Tibial artery (tissue), 4 donors: ENCODE measurements at regions of chr4 and their contacts with region 1.

Region 1: DNA sequence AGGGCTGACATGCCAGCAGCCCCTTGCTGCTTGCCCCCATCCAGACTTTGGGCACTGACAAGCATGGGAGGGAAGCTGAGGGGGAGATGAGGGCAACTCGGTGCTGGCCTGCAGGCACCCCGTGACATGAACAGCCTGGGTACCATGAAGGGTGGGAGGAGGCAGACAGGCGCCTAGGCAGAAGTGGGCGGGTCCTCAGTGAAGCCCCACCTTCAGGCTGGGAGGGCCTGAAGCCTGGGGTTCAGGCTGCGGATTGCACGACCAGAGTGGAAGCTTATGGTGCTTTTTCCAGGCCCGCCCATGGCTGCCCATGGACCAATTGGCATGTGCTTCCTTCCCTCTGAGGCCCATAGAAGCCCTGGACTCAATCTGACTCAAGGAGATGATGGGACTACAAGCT is 354.1 kb downstream of the GRIA2 start:
- DNase-seq: no peak
- H3K4me3 ChIP-seq: no peak overlapping the region
- H3K27ac ChIP-seq: no peak overlapping the region
- H3K4me1 ChIP-seq: peaks cover 0 to 6% (median 0%) of the 10 kb centered on the region in 4 donors
- H3K27me3 ChIP-seq: no peaks in the 10 kb centered on the region
- CTCF ChIP-seq: no peak

Region 2: GRCh38 chr4:157634057-157634456 is 59.5 kb after region 1 on chr4:
- intact Hi-C with region 1: no loop called
- DNase-seq: no peak
- H3K4me3 ChIP-seq: no peak overlapping the region
- H3K27ac ChIP-seq: no peak overlapping the region
- H3K4me1 ChIP-seq: no peaks in the 10 kb centered on the region
- H3K27me3 ChIP-seq: no peaks in the 10 kb centered on the region
- CTCF ChIP-seq: no peak

Region 3: DNA sequence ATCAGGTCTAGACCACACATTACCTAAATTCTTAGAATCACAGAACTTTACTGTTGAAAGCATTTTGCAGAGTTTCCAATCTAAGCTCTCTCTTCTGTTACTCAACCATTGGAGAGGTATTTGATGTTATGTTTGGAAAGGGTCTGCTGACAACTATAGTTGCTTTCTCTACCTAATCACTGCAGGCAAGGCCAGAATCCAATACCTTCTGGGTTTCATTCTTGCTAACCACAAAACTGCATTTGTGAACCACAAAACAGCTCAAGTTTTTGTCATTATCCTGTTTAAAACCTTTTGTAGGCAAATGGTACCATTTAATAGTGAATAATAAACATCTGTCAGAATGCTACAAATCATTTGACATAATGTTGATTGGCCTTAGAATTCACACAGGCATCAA is 218.1 kb after region 1 on chr4:
- intact Hi-C with region 1: no loop called
- DNase-seq: no peak
- H3K4me3 ChIP-seq: no peak overlapping the region
- H3K27ac ChIP-seq: no peak overlapping the region
- H3K4me1 ChIP-seq: peaks cover 0 to 7% (median 0%) of the 10 kb centered on the region in 4 donors
- H3K27me3 ChIP-seq: no peaks in the 10 kb centered on the region
- CTCF ChIP-seq: no peak

Region 4: GRCh38 chr4:159051245-159052071 is 1476.9 kb after region 1 on chr4:
- intact Hi-C with region 1: loop called (anchors 5 kb)
- DNase-seq: no peak
- H3K4me3 ChIP-seq: no peak overlapping the region
- H3K27ac ChIP-seq: no peak overlapping the region
- H3K4me1 ChIP-seq: peaks cover 0 to 8% (median 5%) of the 10 kb centered on the region in 4 donors
- H3K27me3 ChIP-seq: no peaks in the 10 kb centered on the region
- CTCF ChIP-seq: no peak